Activated naive CD4-positive, alpha-beta T cell treated with anti-CD3 and anti-CD28 coated beads, Interleukin-2, amount 10 ng/mL, durations not matched to agents 7 days and 5 days (primary cell): ENCODE measurements at regions of chr14 and their contacts with region 1.

Region 1: GRCh38 chr14:81464247-81465002 is 64.3 kb upstream of the STON2 start:
- DNase-seq: peak; percentile 72
- H3K4me3 Mint-ChIP-seq: peak overlapping the region; percentile 72
- H3K27ac Mint-ChIP-seq: peak overlapping the region; percentile 93
- H3K4me1 Mint-ChIP-seq: peaks cover 18% of the 10 kb centered on the region
- H3K27me3 Mint-ChIP-seq: peaks cover 3% of the 10 kb centered on the region

Region 2: GRCh38 chr14:81269100-81269978 is 195.1 kb before region 1 on chr14:
- CTCF ChIA-PET with region 1: interaction called, 35 read pairs
- DNase-seq: no peak
- H3K4me3 Mint-ChIP-seq: no peak overlapping the region
- H3K27ac Mint-ChIP-seq: no peak overlapping the region
- H3K4me1 Mint-ChIP-seq: peaks cover 15% of the 10 kb centered on the region
- H3K27me3 Mint-ChIP-seq: peaks cover 28% of the 10 kb centered on the region

Region 3: DNA sequence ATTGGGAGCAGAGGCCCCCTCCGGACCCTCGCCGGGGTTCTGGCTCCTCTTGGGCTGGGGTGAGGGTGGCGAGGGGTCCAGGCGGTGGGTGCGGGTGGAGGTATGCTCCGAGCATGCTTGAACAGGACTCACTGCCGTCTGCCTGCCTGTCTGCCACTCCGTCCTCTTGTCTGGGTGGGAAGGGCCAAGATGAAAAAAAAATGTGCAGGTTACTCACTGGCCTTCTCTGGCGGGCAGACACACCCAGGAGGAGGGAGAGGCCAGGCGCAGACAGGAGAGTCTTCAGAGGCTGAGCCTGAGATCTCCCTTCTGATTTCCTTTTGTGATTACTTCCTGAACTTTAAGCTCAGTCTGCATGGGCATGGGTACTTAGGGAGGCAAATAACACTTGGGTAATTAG is 140.4 kb before region 1 on chr14:
- CTCF ChIA-PET with region 1: no interaction called
- DNase-seq: no peak
- H3K4me3 Mint-ChIP-seq: no peak overlapping the region
- H3K27ac Mint-ChIP-seq: no peak overlapping the region
- H3K4me1 Mint-ChIP-seq: no peaks in the 10 kb centered on the region
- H3K27me3 Mint-ChIP-seq: peaks cover 3% of the 10 kb centered on the region

Region 4: DNA sequence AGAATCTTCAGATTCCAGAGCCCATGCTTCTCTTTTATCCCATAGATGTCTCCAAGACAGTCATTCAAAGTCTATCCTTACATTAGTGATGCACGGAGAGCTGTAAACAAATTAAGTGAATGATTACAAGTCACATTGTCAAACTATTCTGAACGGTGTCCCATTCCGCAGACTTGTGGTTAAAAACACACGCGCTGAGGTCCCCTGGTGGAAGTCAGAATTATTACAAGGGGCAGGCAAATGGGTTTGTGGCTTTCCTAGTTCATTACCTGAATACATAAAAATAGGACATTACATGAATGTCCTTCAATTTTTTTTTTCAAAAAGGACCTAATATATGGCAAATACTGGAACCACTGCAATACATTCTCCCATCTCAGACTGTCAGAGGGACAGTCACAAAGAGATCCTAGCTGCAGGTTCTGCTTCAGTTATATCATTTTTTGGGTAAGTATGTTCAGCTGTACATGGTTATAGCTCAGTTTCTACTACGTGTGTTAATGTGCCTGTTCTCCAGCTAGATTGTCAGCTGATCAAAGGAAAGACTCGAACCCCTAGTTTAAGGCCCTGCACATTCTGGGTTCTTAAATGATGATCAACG is 11.2 kb before region 1 on chr14:
- CTCF ChIA-PET with region 1: interaction called, 32 read pairs
- DNase-seq: peak; percentile 62
- H3K4me3 Mint-ChIP-seq: no peak overlapping the region
- H3K27ac Mint-ChIP-seq: no peak overlapping the region
- H3K4me1 Mint-ChIP-seq: peaks cover 7% of the 10 kb centered on the region
- H3K27me3 Mint-ChIP-seq: peaks cover 29% of the 10 kb centered on the region